Gastrocnemius medialis (tissue), 4 donors: ENCODE measurements at regions of chr16 and their contacts with region 1.

Region 1: DNA sequence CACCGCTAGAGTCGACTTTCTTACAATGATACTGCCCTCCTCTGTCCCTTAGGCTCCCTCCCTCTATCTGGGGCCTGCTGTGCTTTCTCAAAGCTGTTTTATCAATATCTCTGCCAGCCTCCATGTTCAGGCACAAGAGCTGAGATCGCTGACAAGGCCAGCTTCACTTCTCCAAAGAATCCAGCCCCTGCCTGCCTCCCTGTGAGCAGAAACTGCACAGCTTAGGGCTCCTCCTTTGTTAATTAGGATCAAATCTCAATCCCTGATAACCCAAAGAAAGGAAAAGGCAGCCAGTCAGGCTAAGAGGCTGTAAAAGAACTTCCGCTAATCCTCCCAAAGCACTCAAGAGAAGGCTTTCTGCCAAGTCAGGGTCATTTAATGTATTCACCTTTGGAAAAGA is 616.0 kb upstream of the CDH11 start:
- DNase-seq: no peak
- ATAC-seq: no peak
- H3K4me3 ChIP-seq: no peak overlapping the region
- H3K27ac ChIP-seq: no peak overlapping the region
- H3K4me1 ChIP-seq: no peaks in the 10 kb centered on the region
- H3K27me3 ChIP-seq: no peaks in the 10 kb centered on the region
- CTCF ChIP-seq: no peak
- POLR2A ChIP-seq: no peak

Region 2: DNA sequence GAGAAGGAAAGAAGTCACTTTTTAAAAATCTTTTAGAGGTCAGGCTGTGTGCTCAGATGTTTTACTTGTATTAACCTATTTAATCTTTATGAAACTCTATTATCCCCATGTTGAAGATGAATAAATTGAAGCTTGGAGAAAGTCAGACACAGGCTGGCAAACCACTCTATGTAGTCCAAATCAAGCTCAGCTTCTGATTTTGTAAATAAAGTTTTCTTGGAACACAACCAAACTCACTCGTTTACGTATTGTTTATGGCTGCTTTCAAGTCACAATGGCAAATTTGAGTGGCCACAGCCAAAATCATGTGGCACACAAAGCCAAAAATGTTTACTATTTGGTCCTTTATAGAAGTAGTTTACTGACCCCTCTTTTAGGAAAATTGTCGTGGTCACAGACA is 20.0 kb before region 1 on chr16:
- in situ Hi-C with region 1: no loop called
- intact Hi-C with region 1: loop called (anchors 2 kb)
- DNase-seq: no peak
- ATAC-seq: no peak
- H3K4me3 ChIP-seq: no peak overlapping the region
- H3K27ac ChIP-seq: no peak overlapping the region
- H3K4me1 ChIP-seq: no peaks in the 10 kb centered on the region
- H3K27me3 ChIP-seq: no peaks in the 10 kb centered on the region
- CTCF ChIP-seq: no peak
- POLR2A ChIP-seq: no peak

Region 3: DNA sequence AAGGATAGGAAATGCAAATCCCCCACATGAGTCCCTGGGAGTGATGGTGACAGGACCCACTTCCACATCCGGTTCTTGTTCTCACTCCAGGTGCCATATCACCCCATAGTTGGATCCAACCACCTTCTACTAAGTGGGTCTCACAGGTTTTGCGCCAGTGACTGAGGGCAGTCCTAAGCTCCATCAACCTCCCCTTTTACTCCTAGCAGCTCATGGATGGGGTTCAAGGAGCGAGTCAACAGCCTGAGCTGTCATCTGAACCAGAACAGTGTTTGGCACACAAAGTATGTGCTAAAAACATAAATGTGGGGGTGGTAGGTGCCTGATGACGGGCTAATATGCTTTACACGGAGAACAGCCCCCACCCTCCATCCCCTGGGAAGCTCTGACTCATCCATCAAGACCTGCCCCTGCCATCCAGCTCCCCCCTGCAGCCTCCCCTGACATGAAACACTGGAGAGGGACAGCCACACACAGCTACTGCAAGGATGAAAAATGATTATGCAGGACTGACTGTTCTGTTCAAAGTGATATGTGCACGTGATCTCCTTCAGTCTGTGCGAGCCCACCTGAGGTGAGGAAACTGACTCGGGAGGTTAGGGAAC is 485.4 kb after region 1 on chr16:
- in situ Hi-C with region 1: no loop called
- intact Hi-C with region 1: no loop called
- DNase-seq: no peak
- ATAC-seq: no peak
- H3K4me3 ChIP-seq: no peak overlapping the region
- H3K27ac ChIP-seq: no peak overlapping the region
- H3K4me1 ChIP-seq: no peaks in the 10 kb centered on the region
- H3K27me3 ChIP-seq: no peaks in the 10 kb centered on the region
- CTCF ChIP-seq: no peak
- POLR2A ChIP-seq: no peak